ENCODE measurements at regions of chr2 and their contacts with region 1.

Region 1: GRCh38 chr2:225002039-225002655 is 40.1 kb downstream of the DOCK10 start:
- DNase-seq: peak; percentile 78
- ATAC-seq: peak; percentile 74
- H3K4me3 ChIP-seq: no peak overlapping the region
- H3K27ac ChIP-seq: peak overlapping the region; percentile 20; the same call in 1 of the 2 replicates
- H3K4me1 ChIP-seq: peaks cover 9% of the 10 kb centered on the region
- H3K27me3 ChIP-seq: no peaks in the 10 kb centered on the region
- CTCF ChIP-seq: peak; percentile 88
- POLR2A ChIP-seq: no peak
- RAD21 ChIP-seq: peak; percentile 92

Region 2: GRCh38 chr2:224357098-224357901 is 644.8 kb before region 1 on chr2:
- CTCF ChIA-PET with region 1: no interaction called
- POLR2A ChIA-PET with region 1: no interaction called
- dilution Hi-C with region 1: no loop called
- in situ Hi-C with region 1: loop called (anchors 25 kb)
- intact Hi-C with region 1: loop called (anchors 5 kb)
- DNase-seq: peak; percentile 60
- ATAC-seq: peak; percentile 87
- H3K4me3 ChIP-seq: no peak overlapping the region
- H3K27ac ChIP-seq: no peak overlapping the region
- H3K4me1 ChIP-seq: no peaks in the 10 kb centered on the region; the same call in 1 of the 2 replicates
- H3K27me3 ChIP-seq: peaks cover 16% of the 10 kb centered on the region
- CTCF ChIP-seq: peak; percentile 85
- POLR2A ChIP-seq: no peak
- RAD21 ChIP-seq: peak; percentile 88

Region 3: DNA sequence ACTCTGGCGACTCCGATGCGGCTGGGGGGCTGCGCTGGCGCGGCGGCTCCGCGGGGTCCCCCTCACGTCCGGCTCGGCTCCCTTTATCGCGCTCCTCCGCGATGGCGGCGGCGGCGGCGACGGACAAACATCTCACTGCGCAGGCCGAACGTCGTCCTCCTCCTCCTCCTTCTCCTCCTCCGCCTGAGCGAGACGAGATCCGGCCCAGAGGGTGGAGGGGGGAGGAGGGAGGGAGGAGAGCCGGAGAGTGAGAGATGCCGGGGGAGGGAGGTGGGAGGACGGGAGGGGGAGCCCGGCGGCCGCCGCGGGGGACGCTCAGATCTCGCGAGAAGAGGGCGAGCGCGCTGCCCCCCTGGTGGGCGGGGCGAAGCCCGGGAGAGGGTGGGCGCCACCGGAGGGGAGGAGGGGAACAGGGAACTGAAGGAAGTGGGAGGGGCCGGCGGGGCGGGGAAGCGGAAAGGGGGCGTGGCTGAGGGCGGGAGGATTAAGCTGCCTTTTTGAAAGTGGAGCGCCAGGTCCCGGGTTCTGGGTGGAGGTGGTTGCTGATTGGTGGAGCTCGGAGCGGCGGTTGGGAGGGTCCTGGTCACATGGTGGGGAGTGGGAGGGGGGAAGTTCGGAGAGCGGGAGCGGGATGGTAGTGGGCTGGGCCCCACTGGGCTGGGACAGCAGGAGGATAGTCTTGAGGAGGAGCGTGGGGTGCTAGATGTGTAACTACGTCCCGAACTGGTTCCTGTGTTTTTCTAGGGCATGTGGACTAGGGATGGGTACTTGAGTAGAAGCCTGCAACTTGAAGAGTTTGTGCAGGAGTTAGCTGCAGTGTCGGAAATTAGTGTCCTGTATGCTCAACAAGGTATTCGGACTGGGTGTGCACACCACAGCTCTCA is 416.7 kb before region 1 on chr2 and contains the start of gene CUL3:
- CTCF ChIA-PET with region 1: no interaction called
- POLR2A ChIA-PET with region 1: no interaction called
- dilution Hi-C with region 1: no loop called
- in situ Hi-C with region 1: no loop called
- intact Hi-C with region 1: loop called (anchors 5 kb)
- DNase-seq: peak; percentile 96
- ATAC-seq: peak; percentile 95
- H3K4me3 ChIP-seq: peak within 1 kb of the TSS; percentile 72
- H3K27ac ChIP-seq: peak within 1 kb of the TSS; percentile 90
- H3K4me1 ChIP-seq: 0 out of 2 replicates have a peak, but pooled peaks cover 2% of the 10 kb centered on the region
- H3K27me3 ChIP-seq: no peaks in the 10 kb centered on the region
- CTCF ChIP-seq: no peak
- POLR2A ChIP-seq: peak; percentile 90
- RAD21 ChIP-seq: no peak
- total RNA-seq, gene CUL3: 45.7 and 78.3 TPM in 2 replicates

Region 4: GRCh38 chr2:224778474-224778877 is 223.7 kb before region 1 on chr2:
- CTCF ChIA-PET with region 1: no interaction called
- POLR2A ChIA-PET with region 1: no interaction called
- dilution Hi-C with region 1: no loop called
- in situ Hi-C with region 1: no loop called
- intact Hi-C with region 1: loop called (anchors 1 kb)
- DNase-seq: peak; percentile 60
- ATAC-seq: peak; percentile 70; the same call in 1 of the 2 replicates
- H3K4me3 ChIP-seq: no peak overlapping the region
- H3K27ac ChIP-seq: no peak overlapping the region
- H3K4me1 ChIP-seq: 0 out of 2 replicates have a peak, but pooled peaks cover 2% of the 10 kb centered on the region
- H3K27me3 ChIP-seq: no peaks in the 10 kb centered on the region
- CTCF ChIP-seq: peak; percentile 73
- POLR2A ChIP-seq: no peak
- RAD21 ChIP-seq: peak; percentile 62

Region 5: DNA sequence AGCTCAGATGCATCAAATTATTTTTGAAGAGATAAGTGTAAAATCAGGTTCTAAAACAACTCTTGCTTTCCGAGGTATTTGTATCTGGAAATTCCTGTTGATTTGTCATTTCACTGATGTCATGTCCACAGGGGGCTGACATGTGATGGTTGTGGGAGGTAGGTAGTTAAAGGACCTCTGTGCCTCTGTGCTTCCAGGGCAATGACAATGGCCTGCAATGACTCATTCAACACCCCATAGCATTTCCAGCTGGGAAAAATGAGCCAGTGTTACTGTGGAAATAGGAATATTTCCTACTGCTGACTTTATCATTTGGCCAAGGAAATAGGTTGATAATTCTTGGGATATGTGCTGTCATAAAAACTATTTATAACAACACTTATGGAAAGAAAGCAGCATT is 199.7 kb before region 1 on chr2:
- CTCF ChIA-PET with region 1: no interaction called
- POLR2A ChIA-PET with region 1: no interaction called
- dilution Hi-C with region 1: no loop called
- in situ Hi-C with region 1: no loop called
- intact Hi-C with region 1: loop called (anchors 5 kb)
- DNase-seq: peak; percentile 55
- ATAC-seq: no peak; the same call in 1 of the 2 replicates
- H3K4me3 ChIP-seq: no peak overlapping the region
- H3K27ac ChIP-seq: no peak overlapping the region
- H3K4me1 ChIP-seq: peaks cover 3% of the 10 kb centered on the region; the same call in 1 of the 2 replicates
- H3K27me3 ChIP-seq: no peaks in the 10 kb centered on the region
- CTCF ChIP-seq: no peak
- POLR2A ChIP-seq: no peak
- RAD21 ChIP-seq: no peak

Region 6: DNA sequence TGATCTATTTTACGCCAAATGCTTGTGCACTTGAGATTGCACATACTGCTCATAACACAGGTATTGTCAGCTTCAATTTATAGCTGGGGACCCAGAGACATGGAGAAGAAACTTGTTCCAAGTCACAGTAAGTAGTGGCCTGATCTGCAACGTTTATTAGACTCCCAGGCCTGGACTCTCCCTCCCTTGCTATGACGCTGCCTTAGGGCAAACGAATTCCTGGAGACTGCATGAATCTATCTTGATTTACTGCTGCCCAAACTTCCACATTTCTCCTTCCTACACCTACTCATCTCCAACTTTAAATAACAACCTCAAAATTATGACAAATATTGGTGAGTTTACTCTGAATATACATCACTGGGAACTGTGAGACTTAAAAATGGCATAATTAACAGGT is 140.9 kb before region 1 on chr2:
- CTCF ChIA-PET with region 1: no interaction called
- POLR2A ChIA-PET with region 1: no interaction called
- dilution Hi-C with region 1: no loop called
- in situ Hi-C with region 1: no loop called
- intact Hi-C with region 1: loop called (anchors 5 kb)
- DNase-seq: no peak
- ATAC-seq: no peak
- H3K4me3 ChIP-seq: no peak overlapping the region
- H3K27ac ChIP-seq: no peak overlapping the region
- H3K4me1 ChIP-seq: no peaks in the 10 kb centered on the region
- H3K27me3 ChIP-seq: no peaks in the 10 kb centered on the region
- CTCF ChIP-seq: no peak
- POLR2A ChIP-seq: no peak
- RAD21 ChIP-seq: no peak

Region 7: DNA sequence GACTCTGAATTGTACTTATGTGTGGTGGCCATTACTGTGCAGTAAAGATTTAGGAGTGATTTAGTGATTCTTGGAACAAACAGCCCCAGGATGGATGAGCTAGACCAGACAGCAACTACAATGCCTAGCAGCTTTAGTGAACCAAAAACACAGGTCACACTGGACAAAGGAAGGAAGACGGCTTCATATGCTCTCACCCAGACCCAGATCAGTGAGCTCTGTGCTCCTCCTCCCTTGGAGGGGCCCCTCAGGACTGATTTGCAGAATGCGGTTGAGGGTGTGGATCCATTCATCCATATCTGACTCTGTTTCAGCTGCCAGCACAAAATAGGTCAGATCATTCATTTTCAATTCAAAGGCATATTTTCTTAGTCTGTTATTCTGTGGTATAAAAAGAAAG is 126.3 kb before region 1 on chr2:
- CTCF ChIA-PET with region 1: no interaction called
- POLR2A ChIA-PET with region 1: no interaction called
- dilution Hi-C with region 1: no loop called
- in situ Hi-C with region 1: no loop called
- intact Hi-C with region 1: no loop called
- DNase-seq: no peak
- ATAC-seq: no peak
- H3K4me3 ChIP-seq: no peak overlapping the region
- H3K27ac ChIP-seq: no peak overlapping the region
- H3K4me1 ChIP-seq: no peaks in the 10 kb centered on the region; the same call in 1 of the 2 replicates
- H3K27me3 ChIP-seq: no peaks in the 10 kb centered on the region
- CTCF ChIP-seq: no peak
- POLR2A ChIP-seq: no peak
- RAD21 ChIP-seq: no peak

Region 8: GRCh38 chr2:224885836-224886547 is 116.2 kb before region 1 on chr2:
- CTCF ChIA-PET with region 1: no interaction called
- POLR2A ChIA-PET with region 1: no interaction called
- dilution Hi-C with region 1: no loop called
- in situ Hi-C with region 1: no loop called
- intact Hi-C with region 1: loop called (anchors 2 kb)
- DNase-seq: peak; percentile 93
- ATAC-seq: peak; percentile 63
- H3K4me3 ChIP-seq: no peak overlapping the region
- H3K27ac ChIP-seq: peak overlapping the region; percentile 81
- H3K4me1 ChIP-seq: peaks cover 25% of the 10 kb centered on the region
- H3K27me3 ChIP-seq: no peaks in the 10 kb centered on the region
- CTCF ChIP-seq: no peak
- POLR2A ChIP-seq: no peak
- RAD21 ChIP-seq: no peak

Measured in IMR-90 (cell line).